ENCODE measurements at regions of chr3 and their contacts with region 1.

Region 1: GRCh38 chr3:184362668-184363540 is 1.4 kb downstream of the POLR2H start:
- DNase-seq: peak; percentile 81 to 98 (median 93)
- ATAC-seq: peak; percentile 71
- H3K4me3 ChIP-seq: peak overlapping the region; percentile 62 to 93
- H3K4me3 Mint-ChIP-seq: peak overlapping the region; percentile 98
- H3K27ac ChIP-seq: peak overlapping the region; percentile 74 to 87
- H3K27ac Mint-ChIP-seq: peak overlapping the region; percentile 93
- H3K4me1 ChIP-seq: peaks cover 15% of the 10 kb centered on the region
- H3K4me1 Mint-ChIP-seq: peaks cover 30% of the 10 kb centered on the region
- H3K27me3 ChIP-seq: no peaks in the 10 kb centered on the region
- H3K27me3 Mint-ChIP-seq: no peaks in the 10 kb centered on the region
- CTCF ChIP-seq: peak; percentile 13

Region 2: DNA sequence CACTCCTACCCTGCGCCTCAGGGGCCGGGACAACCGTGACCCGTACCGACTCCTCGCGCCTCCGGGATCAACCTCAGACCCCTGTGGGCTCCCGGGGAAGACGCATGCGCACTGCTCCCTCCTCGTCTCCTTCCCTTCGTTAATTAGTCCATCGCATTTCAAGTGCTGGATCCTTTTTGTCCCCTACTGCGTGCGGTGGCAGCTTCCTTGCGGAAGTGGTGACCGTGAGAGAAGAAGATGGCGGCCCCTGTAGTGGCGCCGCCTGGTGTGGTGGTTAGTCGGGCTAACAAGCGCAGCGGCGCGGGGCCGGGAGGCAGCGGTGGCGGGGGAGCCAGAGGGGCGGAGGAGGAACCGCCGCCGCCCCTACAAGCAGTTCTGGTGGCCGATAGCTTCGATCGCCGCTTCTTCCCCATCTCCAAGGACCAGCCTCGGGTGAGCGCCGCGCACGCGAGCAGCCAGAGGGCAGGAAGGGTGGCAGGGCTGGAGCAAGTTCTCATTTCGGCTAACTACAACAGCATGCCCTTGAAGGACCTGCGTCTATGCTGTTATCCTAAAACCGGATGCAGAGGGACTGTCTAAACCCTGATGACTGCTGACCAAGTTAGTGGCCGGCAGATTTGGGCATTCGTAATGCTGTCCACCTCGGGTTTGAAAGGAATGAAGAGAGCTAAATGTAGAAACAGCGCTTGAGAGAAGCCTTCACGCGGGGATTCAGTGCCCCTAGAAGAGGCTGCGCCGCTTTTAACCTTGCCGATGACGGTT is 227.6 kb before region 1 on chr3 and contains the start of gene EIF2B5:
- CTCF ChIA-PET with region 1: no interaction called
- POLR2A ChIA-PET with region 1: no interaction called
- intact Hi-C with region 1: loop called in 1 of 2 experiments (anchors 2 kb)
- DNase-seq: peak; percentile 67 to 95 (median 87)
- ATAC-seq: peak; percentile 89
- H3K4me3 ChIP-seq: peak within 1 kb of the TSS; percentile 79 to 91
- H3K4me3 Mint-ChIP-seq: peak within 1 kb of the TSS; percentile 100
- H3K27ac ChIP-seq: peak within 1 kb of the TSS; percentile 76 to 83
- H3K27ac Mint-ChIP-seq: peak within 1 kb of the TSS; percentile 98
- H3K4me1 ChIP-seq: peaks cover 25% of the 10 kb centered on the region
- H3K4me1 Mint-ChIP-seq: peaks cover 41% of the 10 kb centered on the region
- H3K27me3 ChIP-seq: no peaks in the 10 kb centered on the region
- H3K27me3 Mint-ChIP-seq: no peaks in the 10 kb centered on the region
- CTCF ChIP-seq: no peak
- total RNA-seq, gene EIF2B5: 52.6 to 61.9 TPM

Region 3: DNA sequence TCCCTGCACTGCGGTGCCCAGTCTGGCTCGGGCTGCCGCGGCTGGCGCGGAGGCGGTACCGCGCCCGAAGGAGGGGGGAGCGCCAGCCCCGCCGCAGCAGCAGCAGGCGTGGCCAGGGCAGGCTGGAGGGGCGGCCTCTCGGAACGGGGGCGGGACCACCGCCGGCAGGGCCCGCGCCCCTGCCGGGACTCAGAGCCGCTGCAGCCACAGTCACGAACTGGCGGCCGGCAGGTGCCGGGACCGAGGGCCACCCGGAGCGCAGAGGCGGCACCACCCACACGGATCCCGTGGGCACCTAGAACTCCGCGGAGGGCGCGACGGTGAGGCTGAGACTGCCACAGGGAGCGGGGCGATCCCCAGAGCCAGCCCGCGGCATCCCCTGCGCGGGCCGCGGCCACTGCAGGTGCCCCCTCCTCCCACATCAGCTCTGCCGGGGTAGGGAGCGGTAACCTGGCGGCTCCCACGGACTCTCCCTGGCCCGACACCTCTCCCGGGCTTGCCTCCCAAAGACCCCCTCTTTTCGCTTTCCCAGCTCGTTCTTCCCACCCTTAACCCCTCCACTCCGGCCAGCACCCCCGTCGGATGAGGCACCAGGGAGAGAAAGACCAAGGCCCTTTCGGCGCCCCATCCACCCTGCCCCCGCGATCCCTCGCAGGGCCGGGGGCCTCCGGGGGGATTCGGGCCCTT is 133.4 kb before region 1 on chr3 and contains the start of gene VWA5B2:
- CTCF ChIA-PET with region 1: no interaction called
- POLR2A ChIA-PET with region 1: no interaction called
- intact Hi-C with region 1: loop called in 1 of 2 experiments (anchors 2 kb)
- DNase-seq: peak; percentile 54 to 89 (median 75)
- ATAC-seq: peak; percentile 97
- H3K4me3 ChIP-seq: peak within 1 kb of the TSS; percentile 52 to 80
- H3K4me3 Mint-ChIP-seq: peak within 1 kb of the TSS; percentile 76
- H3K27ac ChIP-seq: no peak within 1 kb of the TSS
- H3K27ac Mint-ChIP-seq: no peak within 1 kb of the TSS
- H3K4me1 ChIP-seq: peaks cover 14% of the 10 kb centered on the region
- H3K4me1 Mint-ChIP-seq: peaks cover 14% of the 10 kb centered on the region
- H3K27me3 ChIP-seq: peaks cover 21 to 31% of the 10 kb centered on the region in 2 experiments
- H3K27me3 Mint-ChIP-seq: peaks cover 49% of the 10 kb centered on the region
- CTCF ChIP-seq: peak; percentile 35
- total RNA-seq, gene VWA5B2: 0.28 to 0.65 TPM

Region 4: DNA sequence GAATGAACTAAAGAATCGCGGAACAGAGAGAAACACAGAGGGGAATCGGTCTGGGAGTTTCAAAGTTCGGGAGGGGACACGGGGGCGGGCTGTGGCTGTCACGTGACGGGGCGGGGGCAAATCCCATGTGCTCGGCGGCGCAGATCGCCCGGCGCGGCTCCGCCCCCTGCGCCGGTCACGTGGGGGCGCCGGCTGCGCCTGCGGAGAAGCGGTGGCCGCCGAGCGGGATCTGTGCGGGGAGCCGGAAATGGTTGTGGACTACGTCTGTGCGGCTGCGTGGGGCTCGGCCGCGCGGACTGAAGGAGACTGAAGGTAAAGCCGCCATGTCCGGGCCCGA is 48.6 kb before region 1 on chr3 and contains the start of gene EIF4G1:
- CTCF ChIA-PET with region 1: no interaction called
- POLR2A ChIA-PET with region 1: no interaction called
- intact Hi-C with region 1: loop called (anchors 1 to 2 kb)
- DNase-seq: peak; percentile 83 to 98 (median 92)
- ATAC-seq: peak; percentile 78
- H3K4me3 ChIP-seq: peak within 1 kb of the TSS; percentile 60 to 64
- H3K4me3 Mint-ChIP-seq: peak within 1 kb of the TSS; percentile 87
- H3K27ac ChIP-seq: peak within 1 kb of the TSS; percentile 80 to 93
- H3K27ac Mint-ChIP-seq: peak within 1 kb of the TSS; percentile 94
- H3K4me1 ChIP-seq: peaks cover 23% of the 10 kb centered on the region
- H3K4me1 Mint-ChIP-seq: peaks cover 33% of the 10 kb centered on the region
- H3K27me3 ChIP-seq: no peaks in the 10 kb centered on the region
- H3K27me3 Mint-ChIP-seq: no peaks in the 10 kb centered on the region
- CTCF ChIP-seq: no peak
- total RNA-seq, gene EIF4G1: 220 to 235 TPM

Region 5: DNA sequence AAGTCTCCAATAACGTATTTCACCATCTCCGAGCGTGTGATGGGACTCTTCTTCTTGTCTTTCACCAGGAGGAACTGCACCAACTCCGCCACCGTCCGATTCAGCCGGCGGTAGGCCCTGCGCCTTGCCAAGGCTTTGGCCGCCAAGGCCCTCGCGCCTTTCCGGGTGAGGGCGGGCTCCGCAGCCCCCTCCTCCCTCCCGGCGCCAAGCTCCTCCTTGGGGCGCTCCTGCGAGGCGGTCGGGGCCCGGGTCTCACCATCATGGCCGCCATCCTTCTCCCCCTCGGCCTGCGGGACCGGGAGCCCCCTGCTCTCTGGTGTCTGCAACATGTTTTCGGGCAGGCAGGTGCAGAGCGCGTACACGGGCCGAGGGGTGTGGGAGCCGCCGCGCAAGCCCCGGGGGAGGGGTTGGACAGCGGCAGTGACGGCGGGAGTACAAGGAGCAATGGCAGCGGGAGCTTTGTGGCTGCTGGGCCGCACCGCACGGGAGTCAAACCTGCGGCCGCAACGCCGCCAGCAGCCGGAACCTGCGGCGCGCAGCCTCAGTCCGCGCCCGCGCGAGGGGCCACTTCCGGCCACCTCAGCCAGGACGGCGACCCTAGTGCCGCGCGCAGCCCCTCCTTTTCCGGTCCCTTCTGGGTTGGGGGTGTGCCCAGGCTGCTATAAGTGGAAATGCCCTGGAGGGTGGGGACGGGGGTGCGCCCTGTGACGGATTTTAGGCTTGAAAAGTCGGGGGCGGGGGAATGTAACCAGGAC is 348.8 kb after region 1 on chr3 and contains the start of gene MAGEF1:
- CTCF ChIA-PET with region 1: no interaction called
- POLR2A ChIA-PET with region 1: interaction called, 3 read pairs
- intact Hi-C with region 1: loop called (anchors 2 kb)
- DNase-seq: peak; percentile 22 to 85 (median 73)
- ATAC-seq: peak; percentile 83
- H3K4me3 ChIP-seq: peak within 1 kb of the TSS; percentile 62 to 85
- H3K4me3 Mint-ChIP-seq: peak within 1 kb of the TSS; percentile 90
- H3K27ac ChIP-seq: peak within 1 kb of the TSS; percentile 73 to 77
- H3K27ac Mint-ChIP-seq: peak within 1 kb of the TSS; percentile 91
- H3K4me1 ChIP-seq: peaks cover 14% of the 10 kb centered on the region
- H3K4me1 Mint-ChIP-seq: peaks cover 28% of the 10 kb centered on the region
- H3K27me3 ChIP-seq: no peaks in the 10 kb centered on the region
- H3K27me3 Mint-ChIP-seq: no peaks in the 10 kb centered on the region
- CTCF ChIP-seq: no peak
- total RNA-seq, gene MAGEF1: 3.2 to 3.3 TPM